Head of caudate nucleus (tissue), 42 donors: ENCODE measurements at regions of chr4 and their contacts with region 1.

Region 1: GRCh38 chr4:16626945-16627344 is 271.5 kb downstream of the LDB2 start:
- DNase-seq: peak in 11 of 42 donors; percentile 8 to 59 (median 33)

Region 2: DNA sequence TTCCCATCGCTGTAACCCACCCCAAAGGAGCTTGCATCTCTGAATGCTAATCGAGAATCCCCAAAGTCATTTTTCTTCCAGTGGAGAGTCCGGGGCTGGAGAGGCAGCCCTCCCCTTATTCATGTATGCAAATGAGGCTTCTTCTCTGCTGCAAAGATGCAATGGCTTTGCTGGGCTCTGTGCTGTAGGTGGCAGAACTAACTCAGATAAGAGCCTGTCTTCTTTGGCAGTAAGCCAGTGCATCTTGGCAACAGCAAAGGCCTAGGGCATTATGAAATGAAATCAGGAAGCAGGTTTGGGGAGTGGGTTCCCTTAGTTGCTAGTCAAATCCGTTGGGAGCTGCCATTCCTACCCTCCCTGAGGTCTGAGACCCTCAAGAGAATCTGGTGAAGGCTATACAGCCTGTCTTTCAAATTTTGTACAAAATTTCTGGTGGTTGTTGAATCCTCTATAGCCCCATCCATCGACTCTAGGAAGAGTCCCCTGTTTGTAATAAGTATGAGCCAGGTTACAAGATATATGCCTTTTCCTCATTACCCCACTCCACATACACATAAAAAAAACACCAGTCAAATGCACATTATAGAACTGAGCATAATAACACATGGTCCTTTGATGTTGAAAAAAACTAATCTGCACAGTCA is 110.0 kb before region 1 on chr4:
- intact Hi-C with region 1: loop called (anchors 5 kb)
- DNase-seq: peak; percentile 30 to 95 (median 80)